ENCODE measurements at regions of chr1 and their contacts with region 1.

Region 1: DNA sequence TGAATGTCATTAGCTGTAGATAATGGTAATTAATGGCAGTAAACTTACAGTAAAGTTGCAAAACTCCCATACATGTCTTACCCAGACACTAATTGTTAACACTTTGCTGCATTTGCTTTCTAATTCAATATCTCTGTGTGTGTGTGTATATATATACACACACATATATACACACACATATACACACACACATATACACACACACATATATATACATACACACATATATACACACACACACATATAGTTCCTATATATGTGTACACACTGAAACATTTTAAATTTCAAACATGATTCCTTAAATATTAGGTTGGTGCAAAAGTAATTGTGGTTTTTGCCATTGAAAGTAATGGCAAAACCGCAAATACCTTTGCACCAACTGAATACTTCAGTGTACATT is 3.7 kb upstream of the EPHX1 start:
- DNase-seq: no peak
- ATAC-seq: no peak
- H3K4me3 ChIP-seq: no peak overlapping the region
- H3K27ac ChIP-seq: no peak overlapping the region
- H3K4me1 ChIP-seq: peaks cover 9% of the 10 kb centered on the region
- H3K27me3 ChIP-seq: no peaks in the 10 kb centered on the region
- CTCF ChIP-seq: no peak

Region 2: GRCh38 chr1:225425201-225425786 is 381.0 kb before region 1 on chr1:
- CTCF ChIA-PET with region 1: no interaction called
- POLR2A ChIA-PET with region 1: interaction called, 10 read pairs
- in situ Hi-C with region 1: no loop called
- intact Hi-C with region 1: no loop called
- DNase-seq: no peak
- ATAC-seq: no peak
- H3K4me3 ChIP-seq: no peak overlapping the region
- H3K27ac ChIP-seq: peak overlapping the region; percentile 76; the same call in 1 of the 2 replicates
- H3K4me1 ChIP-seq: peaks cover 41% of the 10 kb centered on the region
- H3K27me3 ChIP-seq: no peaks in the 10 kb centered on the region
- CTCF ChIP-seq: no peak

Region 3: GRCh38 chr1:225710804-225711203 is 95.4 kb before region 1 on chr1:
- CTCF ChIA-PET with region 1: no interaction called
- POLR2A ChIA-PET with region 1: no interaction called
- in situ Hi-C with region 1: no loop called
- intact Hi-C with region 1: no loop called
- DNase-seq: no peak
- ATAC-seq: no peak
- H3K4me3 ChIP-seq: no peak overlapping the region
- H3K27ac ChIP-seq: no peak overlapping the region
- H3K4me1 ChIP-seq: no peaks in the 10 kb centered on the region
- H3K27me3 ChIP-seq: no peaks in the 10 kb centered on the region
- CTCF ChIP-seq: no peak